Calu3 (cell line): ENCODE measurements at regions of chr4 and their contacts with region 1.

Region 1: GRCh38 chr4:183241322-183241640 is 78.8 kb downstream of the CLDN22 start:
- DNase-seq: peak; percentile 40
- H3K4me3 Mint-ChIP-seq: peak overlapping the region; percentile 35
- H3K27ac Mint-ChIP-seq: peak overlapping the region; percentile 79
- H3K4me1 Mint-ChIP-seq: peaks cover 77% of the 10 kb centered on the region
- H3K27me3 Mint-ChIP-seq: no peaks in the 10 kb centered on the region
- CTCF ChIP-seq: no peak

Region 2: DNA sequence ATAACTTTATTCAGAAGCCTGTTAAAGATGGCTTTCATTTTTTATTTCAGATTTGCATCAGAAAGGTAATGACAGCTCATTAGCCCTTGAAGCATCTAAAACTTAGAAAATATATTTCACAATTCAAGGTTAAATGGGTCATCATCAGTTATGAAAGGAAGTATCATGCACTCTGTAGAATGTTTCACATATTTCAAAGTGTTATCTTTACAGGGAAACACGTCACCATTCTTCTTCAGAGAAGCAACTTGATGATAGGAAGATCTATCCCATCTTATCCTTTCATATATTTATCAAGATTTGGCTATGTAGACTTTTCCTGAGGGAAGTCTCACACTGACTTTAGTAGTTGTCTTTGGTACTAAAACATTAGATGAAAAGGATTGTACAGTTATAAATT is 720.3 kb before region 1 on chr4:
- CTCF ChIA-PET with region 1: no interaction called
- intact Hi-C with region 1: no loop called
- DNase-seq: no peak
- H3K4me3 Mint-ChIP-seq: no peak overlapping the region
- H3K27ac Mint-ChIP-seq: no peak overlapping the region
- H3K4me1 Mint-ChIP-seq: no peaks in the 10 kb centered on the region
- H3K27me3 Mint-ChIP-seq: no peaks in the 10 kb centered on the region
- CTCF ChIP-seq: no peak

Region 3: DNA sequence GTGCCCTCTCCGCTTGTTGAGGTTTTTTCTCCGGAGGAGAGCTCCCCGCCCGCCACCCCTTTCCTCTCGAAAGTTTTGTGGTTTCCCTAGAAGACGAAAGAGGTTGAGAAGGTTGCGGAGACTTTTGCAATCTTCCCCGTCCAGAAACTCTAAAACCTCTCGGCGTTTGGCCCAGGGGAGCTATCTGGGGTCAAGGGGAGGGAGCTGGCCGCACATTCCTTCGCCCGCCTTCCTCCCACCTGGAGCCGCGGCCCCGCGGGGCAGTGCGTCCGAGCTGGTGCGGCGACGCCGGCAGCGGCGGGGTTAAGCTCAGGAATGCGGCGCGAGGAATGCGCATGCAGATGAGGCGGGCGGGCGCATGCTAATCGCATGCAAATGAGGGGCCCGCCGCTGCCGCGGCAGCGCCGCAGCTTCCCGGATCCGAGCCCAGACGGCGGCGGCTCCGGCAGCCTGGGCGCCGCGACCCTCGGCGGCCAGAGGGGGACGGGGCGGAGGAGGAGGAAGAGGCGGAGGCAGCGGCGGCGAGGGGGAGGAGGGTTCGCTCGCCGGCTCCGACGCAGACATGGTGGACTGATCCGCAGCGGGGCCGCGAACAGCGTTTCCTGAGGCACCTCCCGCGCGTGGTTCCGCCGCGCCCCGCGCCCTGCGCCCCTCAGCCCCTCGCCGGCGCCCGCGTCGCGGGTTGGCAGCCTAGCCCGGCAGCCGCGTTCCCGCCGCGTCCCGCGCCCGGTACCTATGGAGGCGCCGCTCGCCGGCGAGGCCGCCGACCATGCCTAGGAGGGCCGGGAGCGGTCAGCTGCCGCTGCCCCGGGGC is 142.4 kb before region 1 on chr4 and contains the start of gene WWC2:
- CTCF ChIA-PET with region 1: interaction called, 5 read pairs
- intact Hi-C with region 1: loop called (anchors 2 kb)
- DNase-seq: peak; percentile 85
- H3K4me3 Mint-ChIP-seq: peak within 1 kb of the TSS; percentile 70
- H3K27ac Mint-ChIP-seq: no peak within 1 kb of the TSS
- H3K4me1 Mint-ChIP-seq: peaks cover 26% of the 10 kb centered on the region
- H3K27me3 Mint-ChIP-seq: no peaks in the 10 kb centered on the region
- CTCF ChIP-seq: no peak
- total RNA-seq, gene WWC2: 38.7 and 39.0 TPM in 2 replicates

Region 4: DNA sequence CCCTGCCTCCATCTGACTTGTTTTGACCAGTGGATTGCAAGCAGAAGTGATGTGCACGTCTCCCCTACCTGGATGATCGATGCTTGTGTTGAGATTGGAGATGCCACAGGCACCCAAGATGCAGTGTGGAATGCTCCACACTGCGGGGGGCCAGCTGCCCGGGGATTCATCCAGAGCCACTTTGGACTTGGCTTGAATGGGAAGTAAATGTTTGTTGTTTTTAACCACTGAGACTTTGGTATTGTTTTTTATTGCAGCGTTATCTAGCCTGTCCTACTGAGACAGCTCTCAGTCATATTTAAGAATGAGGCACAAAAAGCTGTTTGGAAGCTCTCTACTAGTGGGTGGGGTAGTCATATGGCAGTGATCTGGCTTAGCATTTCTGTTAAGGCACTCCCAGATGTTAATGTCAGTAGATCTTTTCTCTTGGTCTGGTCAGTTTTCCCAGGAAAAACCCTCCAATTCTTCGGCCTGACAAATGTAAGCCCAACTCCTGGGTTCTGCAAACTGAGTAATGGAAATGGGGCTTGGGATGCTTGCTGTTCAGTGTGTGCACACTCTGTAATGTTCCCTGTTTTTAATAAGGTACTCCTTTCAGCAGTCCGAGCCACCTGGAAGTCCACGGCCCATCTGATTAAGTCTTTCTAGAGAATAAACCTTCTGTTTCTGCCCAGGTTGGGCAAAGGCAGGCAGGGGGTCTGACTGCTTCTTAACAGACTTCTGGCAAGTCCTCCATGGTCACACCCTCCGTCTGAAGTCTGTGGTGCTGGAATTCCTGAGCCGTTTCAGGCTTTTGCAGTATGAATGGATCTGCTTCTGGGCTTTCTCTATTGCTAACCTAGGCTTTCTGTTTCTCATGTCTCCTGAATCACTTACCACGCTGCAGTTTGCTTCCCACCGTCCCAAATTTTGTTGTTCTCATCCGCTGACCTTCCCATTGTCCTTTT is 67.4 kb before region 1 on chr4:
- CTCF ChIA-PET with region 1: interaction called, 3 read pairs
- intact Hi-C with region 1: loop called (anchors 5 kb)
- DNase-seq: no peak
- H3K4me3 Mint-ChIP-seq: peak overlapping the region; percentile 68
- H3K27ac Mint-ChIP-seq: peak overlapping the region; percentile 83
- H3K4me1 Mint-ChIP-seq: peaks cover 53% of the 10 kb centered on the region
- H3K27me3 Mint-ChIP-seq: no peaks in the 10 kb centered on the region
- CTCF ChIP-seq: no peak

Region 5: GRCh38 chr4:183200453-183200852 is 40.8 kb before region 1 on chr4:
- CTCF ChIA-PET with region 1: interaction called, 3 read pairs
- intact Hi-C with region 1: loop called (anchors 2 kb)
- DNase-seq: peak; percentile 75
- H3K4me3 Mint-ChIP-seq: no peak overlapping the region
- H3K27ac Mint-ChIP-seq: peak overlapping the region; percentile 54
- H3K4me1 Mint-ChIP-seq: peaks cover 32% of the 10 kb centered on the region
- H3K27me3 Mint-ChIP-seq: no peaks in the 10 kb centered on the region
- CTCF ChIP-seq: no peak

Region 6: DNA sequence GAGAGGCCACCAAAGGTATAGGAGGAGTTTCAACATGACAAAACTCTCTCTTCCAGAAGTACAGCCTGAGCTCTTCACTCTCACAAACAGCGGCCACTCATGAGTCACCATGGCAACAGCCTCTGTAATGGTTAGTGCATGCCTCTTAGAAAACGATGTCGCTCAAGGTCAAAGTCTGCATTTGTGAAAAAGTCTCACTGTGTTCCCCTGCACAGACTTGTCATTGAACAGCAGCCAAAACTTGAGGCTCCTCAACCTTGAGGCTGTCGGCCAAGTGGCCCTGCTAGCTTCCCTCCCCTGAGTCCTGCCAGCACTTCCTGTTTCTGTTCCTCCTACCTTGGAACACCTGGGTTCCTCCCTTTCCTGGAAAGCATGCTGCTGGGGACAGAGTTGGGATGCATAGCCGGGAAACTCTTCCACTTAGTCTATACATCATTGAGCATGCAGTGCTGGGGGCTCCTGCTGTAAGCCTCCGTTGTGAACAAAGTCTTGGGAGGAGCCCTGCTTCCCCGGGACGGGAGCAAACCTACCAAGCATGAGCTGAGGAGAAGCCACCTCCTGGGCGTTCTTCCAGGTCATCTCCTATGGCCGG is 330.2 kb after region 1 on chr4:
- CTCF ChIA-PET with region 1: no interaction called
- intact Hi-C with region 1: no loop called
- DNase-seq: peak; percentile 35
- H3K4me3 Mint-ChIP-seq: peak overlapping the region; percentile 57
- H3K27ac Mint-ChIP-seq: no peak overlapping the region
- H3K4me1 Mint-ChIP-seq: no peaks in the 10 kb centered on the region
- H3K27me3 Mint-ChIP-seq: peaks cover 17% of the 10 kb centered on the region
- CTCF ChIP-seq: no peak

Region 7: DNA sequence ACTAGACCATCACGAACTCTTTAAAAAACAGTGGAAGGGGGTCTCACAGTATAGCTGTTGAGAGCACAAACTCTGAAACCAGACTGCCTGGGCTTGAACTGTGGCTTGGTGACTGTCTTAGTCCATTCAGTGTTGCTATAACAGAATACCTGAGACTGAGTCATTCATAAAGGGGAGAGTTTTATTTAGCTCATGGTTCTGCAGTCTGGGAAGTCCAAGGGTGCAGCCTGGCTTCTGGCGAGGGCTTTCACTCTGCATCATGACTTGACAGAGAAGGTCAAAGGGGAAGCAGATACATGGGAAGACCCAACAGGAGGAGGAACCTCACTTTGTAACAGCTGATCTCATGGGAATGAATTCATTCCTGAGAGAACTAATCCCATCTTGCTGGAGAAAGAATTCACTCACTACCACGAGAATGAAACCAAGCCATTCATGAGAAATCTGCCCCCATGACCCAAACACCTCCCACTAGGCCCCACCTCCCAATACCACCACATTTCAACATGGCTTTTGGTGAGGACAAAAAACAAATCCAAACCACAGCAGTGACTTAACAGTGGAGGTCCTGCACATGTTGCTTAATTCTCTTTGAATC is 547.1 kb after region 1 on chr4:
- CTCF ChIA-PET with region 1: no interaction called
- intact Hi-C with region 1: no loop called
- DNase-seq: no peak
- H3K4me3 Mint-ChIP-seq: no peak overlapping the region
- H3K27ac Mint-ChIP-seq: no peak overlapping the region
- H3K4me1 Mint-ChIP-seq: no peaks in the 10 kb centered on the region
- H3K27me3 Mint-ChIP-seq: peaks cover 12% of the 10 kb centered on the region
- CTCF ChIP-seq: no peak